Ovary (tissue), 10 donors: ENCODE measurements at regions of chrX and their contacts with region 1.

Region 1: DNA sequence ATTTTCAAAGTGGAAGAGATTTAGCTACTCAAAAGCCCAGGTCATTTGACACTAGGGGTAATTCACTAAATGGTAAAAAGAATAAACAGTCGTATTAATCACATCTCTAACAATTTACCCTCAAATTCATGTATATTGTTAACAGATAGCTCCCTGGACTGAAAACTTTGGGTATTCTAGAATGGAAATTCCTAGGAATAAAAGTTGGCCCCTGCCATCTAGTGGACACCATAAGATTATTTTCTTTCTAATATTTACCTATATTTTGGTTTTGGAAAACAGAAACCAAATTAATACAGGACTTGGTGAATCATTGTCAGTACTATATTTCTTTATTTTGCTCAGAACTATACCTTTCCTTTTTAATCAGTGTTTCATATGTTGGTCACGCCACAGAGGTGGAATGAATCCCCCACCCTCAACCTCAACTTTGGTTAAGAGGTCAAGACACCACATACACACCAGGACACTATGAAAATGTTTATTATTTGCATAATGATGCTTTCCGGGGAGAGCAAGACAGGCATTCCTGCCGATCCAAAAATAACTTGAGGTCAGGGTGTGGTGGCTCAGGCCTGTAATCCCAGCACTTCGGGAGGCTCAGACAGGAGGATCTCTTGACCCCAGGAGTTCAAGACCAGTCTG is 96.2 kb upstream of the APOOL start:
- DNase-seq: no peak
- H3K4me3 ChIP-seq: no peak overlapping the region
- H3K27ac ChIP-seq: no peak overlapping the region
- H3K4me1 ChIP-seq: no peaks in the 10 kb centered on the region
- H3K27me3 ChIP-seq: no peaks in the 10 kb centered on the region
- CTCF ChIP-seq: peak in 1 of 3 donors; percentile 18
- EP300 ChIP-seq: no peak
- POLR2A ChIP-seq: no peak

Region 2: GRCh38 chrX:84729809-84730208 is 177.6 kb before region 1 on chrX:
- intact Hi-C with region 1: loop called in 2 of 4 experiments (anchors 10 kb)
- DNase-seq: no peak
- H3K4me3 ChIP-seq: no peak overlapping the region
- H3K27ac ChIP-seq: no peak overlapping the region
- H3K4me1 ChIP-seq: no peaks in the 10 kb centered on the region
- H3K27me3 ChIP-seq: no peaks in the 10 kb centered on the region
- CTCF ChIP-seq: peak in 2 of 3 donors; percentile 34 to 48
- EP300 ChIP-seq: no peak
- POLR2A ChIP-seq: no peak